Activated CD4-positive, alpha-beta memory T cell treated with anti-CD3 and anti-CD28 coated beads for 36 hours (primary cell): ENCODE measurements at regions of chr4 and their contacts with region 1.

Region 1: GRCh38 chr4:119238068-119238722 is 25.7 kb downstream of the USP53 start:
- DNase-seq: peak; percentile 54
- H3K4me3 Mint-ChIP-seq: no peak overlapping the region
- H3K27ac Mint-ChIP-seq: peak overlapping the region; percentile 69
- H3K4me1 Mint-ChIP-seq: peaks cover 33% of the 10 kb centered on the region
- H3K27me3 Mint-ChIP-seq: no peaks in the 10 kb centered on the region

Region 2: GRCh38 chr4:119151161-119151560 is 87.0 kb before region 1 on chr4:
- CTCF ChIA-PET with region 1: no interaction called
- POLR2A ChIA-PET with region 1: no interaction called
- intact Hi-C with region 1: no loop called
- DNase-seq: no peak
- H3K4me3 Mint-ChIP-seq: no peak overlapping the region
- H3K27ac Mint-ChIP-seq: no peak overlapping the region
- H3K4me1 Mint-ChIP-seq: no peaks in the 10 kb centered on the region
- H3K27me3 Mint-ChIP-seq: peaks cover 1% of the 10 kb centered on the region

Region 3: DNA sequence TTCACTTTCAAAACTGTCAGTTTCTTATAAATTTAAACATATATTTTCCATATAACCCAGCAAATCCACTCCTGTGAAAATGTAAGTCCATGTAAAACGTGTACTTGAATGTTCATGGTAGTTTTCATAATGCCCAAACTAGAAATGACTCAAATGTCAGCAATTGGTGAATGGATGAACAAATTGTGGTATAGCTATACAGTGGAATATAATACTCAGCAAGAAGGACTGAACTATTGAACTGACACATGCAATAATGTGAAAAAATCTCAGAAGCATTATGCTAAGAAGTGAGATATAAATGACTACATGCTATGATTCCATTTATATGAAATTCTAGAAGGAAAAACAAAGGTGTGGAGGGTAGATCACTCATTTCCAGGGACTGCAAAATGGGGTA is 26.5 kb after region 1 on chr4:
- CTCF ChIA-PET with region 1: interaction called, 3 read pairs
- POLR2A ChIA-PET with region 1: interaction called, 4 read pairs
- intact Hi-C with region 1: loop called (anchors 1 kb)
- DNase-seq: no peak
- H3K4me3 Mint-ChIP-seq: no peak overlapping the region
- H3K27ac Mint-ChIP-seq: peak overlapping the region; percentile 47
- H3K4me1 Mint-ChIP-seq: peaks cover 12% of the 10 kb centered on the region
- H3K27me3 Mint-ChIP-seq: no peaks in the 10 kb centered on the region

Region 4: DNA sequence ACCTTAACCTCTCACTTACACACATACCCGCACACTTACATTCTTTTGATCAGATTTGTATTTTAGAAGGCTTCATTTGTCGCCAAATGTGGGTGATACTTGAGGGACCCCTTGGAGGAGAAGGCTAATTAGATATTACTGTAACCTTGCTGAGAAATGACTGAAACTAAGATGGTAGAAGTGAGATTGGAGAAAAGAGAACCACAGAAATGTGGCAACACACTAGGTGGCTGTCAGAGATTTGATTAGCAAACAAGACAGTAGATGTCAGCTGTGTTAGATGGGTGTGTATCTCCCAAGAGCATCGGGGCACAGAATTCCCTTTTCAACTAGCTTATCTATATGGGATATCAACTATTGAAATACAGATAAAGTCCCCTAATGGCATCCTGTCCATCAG is 233.1 kb after region 1 on chr4:
- CTCF ChIA-PET with region 1: no interaction called
- POLR2A ChIA-PET with region 1: no interaction called
- intact Hi-C with region 1: no loop called
- DNase-seq: no peak
- H3K4me3 Mint-ChIP-seq: no peak overlapping the region
- H3K27ac Mint-ChIP-seq: no peak overlapping the region
- H3K4me1 Mint-ChIP-seq: no peaks in the 10 kb centered on the region
- H3K27me3 Mint-ChIP-seq: no peaks in the 10 kb centered on the region